ENCODE measurements at regions of chr3 and their contacts with region 1.

Region 1: DNA sequence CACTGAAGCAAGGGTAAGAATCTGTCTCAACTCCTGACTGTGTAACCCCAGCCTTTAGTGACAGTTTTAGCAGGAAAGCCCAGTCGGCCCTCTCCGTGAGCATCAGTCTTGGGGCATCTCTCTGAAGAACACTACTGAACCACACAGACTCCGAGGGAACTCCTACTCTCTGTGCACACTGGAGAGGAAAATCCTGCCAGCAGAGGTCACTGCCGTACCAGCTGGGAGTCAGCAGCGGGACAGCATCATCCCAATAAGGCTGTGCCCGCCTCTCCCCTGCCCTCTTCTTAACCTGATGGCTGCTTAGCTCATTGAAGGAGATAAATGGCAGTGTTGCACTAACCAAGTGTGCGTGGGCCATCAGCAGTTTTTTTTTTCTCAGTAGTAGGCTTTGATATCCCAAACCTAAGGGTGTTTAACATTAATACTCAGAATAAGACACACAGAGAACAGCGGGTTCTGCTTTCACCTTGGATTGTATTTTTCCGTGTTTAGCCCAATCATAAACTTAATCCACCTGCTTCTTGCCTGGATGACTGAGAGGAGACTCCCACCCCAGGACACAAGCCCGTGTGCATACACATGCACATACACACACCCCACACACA is 26.6 kb upstream of the RASA2 start:
- DNase-seq: peak; percentile 86 to 92
- ATAC-seq: peak; percentile 99 to 100
- H3K4me3 ChIP-seq: no peak overlapping the region
- H3K27ac ChIP-seq: peak overlapping the region in 1 of 2 experiments; percentile 46; a peak in 4 of 6 replicates
- H3K4me1 ChIP-seq: peaks cover 7% of the 10 kb centered on the region; the same call in 1 of the 3 replicates
- CTCF ChIP-seq: peak; percentile 95
- EP300 ChIP-seq: no peak
- POLR2A ChIP-seq: no peak
- RAD21 ChIP-seq: peak; percentile 97 to 98

Region 2: DNA sequence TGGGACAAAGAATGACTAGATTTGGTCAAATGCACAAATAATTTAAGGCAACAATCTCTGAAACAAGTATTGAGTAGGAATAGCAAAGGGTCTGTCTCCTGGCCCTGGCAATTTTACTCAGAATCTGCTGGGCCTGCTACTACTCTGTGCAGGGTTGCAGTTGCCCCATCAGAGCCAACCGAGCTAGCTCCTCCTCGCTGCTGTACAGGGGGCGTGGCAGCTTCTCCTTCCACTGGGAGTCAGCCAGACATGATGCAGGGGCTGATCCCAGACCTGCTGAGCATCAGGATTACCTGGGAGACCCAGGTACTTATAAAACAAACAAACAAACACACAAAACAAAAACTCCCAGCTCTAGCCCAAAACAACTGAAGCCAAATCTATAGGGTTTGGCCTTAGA is 259.1 kb before region 1 on chr3:
- CTCF ChIA-PET with region 1: no interaction called
- POLR2A ChIA-PET with region 1: no interaction called
- DNase-seq: no peak
- ATAC-seq: peak; percentile 47 to 49; a peak in 1 of 6 replicates
- H3K4me3 ChIP-seq: no peak overlapping the region
- H3K27ac ChIP-seq: no peak overlapping the region
- H3K4me1 ChIP-seq: no peaks in the 10 kb centered on the region
- CTCF ChIP-seq: no peak
- EP300 ChIP-seq: no peak
- POLR2A ChIP-seq: no peak
- RAD21 ChIP-seq: no peak

Region 3: DNA sequence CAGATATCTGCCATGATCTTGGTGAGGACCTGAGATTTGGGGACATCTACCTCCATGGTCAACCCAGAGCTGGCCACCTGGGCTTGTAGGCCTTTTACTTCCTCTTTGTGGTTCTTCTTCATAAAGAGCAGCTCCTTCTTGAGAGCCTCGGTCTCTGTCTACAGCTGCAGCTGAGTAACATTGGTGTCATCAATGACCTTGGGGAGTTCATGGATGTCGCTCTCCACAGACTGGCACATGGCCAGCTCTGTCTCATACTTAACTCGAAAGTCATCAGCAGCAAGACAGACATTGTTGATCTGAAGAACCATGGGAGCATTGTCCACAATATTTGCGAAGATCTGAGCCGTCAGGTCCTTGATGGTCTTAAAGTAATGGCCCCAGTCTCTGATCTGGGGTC is 11.0 kb after region 1 on chr3:
- CTCF ChIA-PET with region 1: interaction called, 56 read pairs
- POLR2A ChIA-PET with region 1: no interaction called
- DNase-seq: no peak
- ATAC-seq: no peak
- H3K4me3 ChIP-seq: no peak overlapping the region
- H3K27ac ChIP-seq: no peak overlapping the region
- H3K4me1 ChIP-seq: no peaks in the 10 kb centered on the region
- CTCF ChIP-seq: no peak
- EP300 ChIP-seq: no peak
- POLR2A ChIP-seq: no peak
- RAD21 ChIP-seq: no peak

Region 4: DNA sequence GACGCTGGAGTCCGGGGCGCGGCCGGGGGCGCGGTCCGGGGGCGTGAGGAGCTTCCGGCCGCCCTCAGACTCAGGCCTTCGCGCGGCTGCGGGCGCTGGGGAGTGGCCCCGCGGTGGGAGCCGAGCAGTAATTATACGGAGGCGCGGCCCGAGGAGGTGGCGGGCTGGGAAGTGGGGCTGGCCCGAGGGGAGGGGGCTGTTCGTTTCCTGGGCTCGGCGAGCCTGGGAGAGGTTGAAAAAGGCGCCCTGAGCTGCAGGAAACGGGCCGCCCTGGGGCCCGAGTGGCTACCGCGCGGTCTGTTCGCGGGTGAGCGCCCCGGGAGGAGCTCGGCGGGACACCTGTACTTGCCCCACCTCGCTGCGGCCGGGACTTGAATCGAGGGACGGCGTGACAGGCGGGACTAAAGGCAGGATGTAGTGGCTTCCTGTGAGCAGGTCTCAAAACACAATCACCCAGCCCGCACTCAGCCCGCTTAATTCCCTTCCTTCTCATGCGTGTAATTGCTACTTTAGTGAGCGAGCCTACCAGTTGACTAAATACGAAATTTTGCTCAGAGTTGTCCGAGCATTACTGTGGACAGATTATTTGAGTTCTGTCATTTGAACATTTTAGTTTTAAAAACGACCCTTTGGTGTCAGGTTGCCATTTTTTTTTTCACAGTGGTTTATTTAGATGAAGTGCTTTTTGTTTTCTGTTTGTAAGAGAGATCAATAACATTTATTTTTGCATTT is 27.5 kb after region 1 on chr3:
- CTCF ChIA-PET with region 1: interaction called, 14 read pairs
- POLR2A ChIA-PET with region 1: interaction called, 10 read pairs
- DNase-seq: peak; percentile 54 to 82
- ATAC-seq: peak; percentile 72 to 81
- H3K4me3 ChIP-seq: peak overlapping the region; percentile 76
- H3K27ac ChIP-seq: peak overlapping the region; percentile 90 to 96
- H3K4me1 ChIP-seq: peaks cover 51% of the 10 kb centered on the region
- CTCF ChIP-seq: no peak
- EP300 ChIP-seq: no peak
- POLR2A ChIP-seq: peak; percentile 31
- RAD21 ChIP-seq: no peak

Region 5: GRCh38 chr3:141547791-141548190 is 87.6 kb after region 1 on chr3:
- CTCF ChIA-PET with region 1: interaction called, 337 read pairs
- POLR2A ChIA-PET with region 1: no interaction called
- DNase-seq: no peak
- ATAC-seq: no peak
- H3K4me3 ChIP-seq: no peak overlapping the region
- H3K27ac ChIP-seq: no peak overlapping the region
- H3K4me1 ChIP-seq: no peaks in the 10 kb centered on the region
- CTCF ChIP-seq: no peak
- EP300 ChIP-seq: no peak
- POLR2A ChIP-seq: no peak
- RAD21 ChIP-seq: no peak

Region 6: GRCh38 chr3:141570068-141570467 is 109.9 kb after region 1 on chr3:
- CTCF ChIA-PET with region 1: interaction called, 337 read pairs
- POLR2A ChIA-PET with region 1: no interaction called
- DNase-seq: no peak
- ATAC-seq: no peak
- H3K4me3 ChIP-seq: no peak overlapping the region
- H3K27ac ChIP-seq: no peak overlapping the region
- H3K4me1 ChIP-seq: no peaks in the 10 kb centered on the region
- CTCF ChIP-seq: no peak
- EP300 ChIP-seq: no peak
- POLR2A ChIP-seq: no peak
- RAD21 ChIP-seq: no peak

Region 7: GRCh38 chr3:141769221-141769894 is 309.2 kb after region 1 on chr3:
- CTCF ChIA-PET with region 1: no interaction called
- POLR2A ChIA-PET with region 1: no interaction called
- DNase-seq: no peak
- ATAC-seq: peak; percentile 56 to 69; a peak in 3 of 6 replicates
- H3K4me3 ChIP-seq: no peak overlapping the region
- H3K27ac ChIP-seq: no peak overlapping the region
- H3K4me1 ChIP-seq: no peaks in the 10 kb centered on the region
- CTCF ChIP-seq: no peak
- EP300 ChIP-seq: no peak
- POLR2A ChIP-seq: no peak
- RAD21 ChIP-seq: no peak

Measured in A549 (cell line).